GM23248 (cell line): ENCODE measurements at regions of chr14 and their contacts with region 1.

Region 1: GRCh38 chr14:59126710-59127432 is 61.6 kb upstream of the DAAM1 start:
- DNase-seq: peak; percentile 75
- H3K4me3 ChIP-seq: no peak overlapping the region
- H3K27ac ChIP-seq: no peak overlapping the region
- H3K4me1 ChIP-seq: peaks cover 10% of the 10 kb centered on the region; the same call in 1 of the 2 replicates
- H3K27me3 ChIP-seq: no peaks in the 10 kb centered on the region

Region 2: GRCh38 chr14:58501214-58501816 is 625.6 kb before region 1 on chr14:
- in situ Hi-C with region 1: loop called (anchors 10 kb)
- DNase-seq: peak; percentile 79
- H3K4me3 ChIP-seq: no peak overlapping the region
- H3K27ac ChIP-seq: no peak overlapping the region
- H3K4me1 ChIP-seq: no peaks in the 10 kb centered on the region
- H3K27me3 ChIP-seq: no peaks in the 10 kb centered on the region

Region 3: GRCh38 chr14:58637391-58638230 is 489.3 kb before region 1 on chr14 and contains the start of gene DACT1:
- in situ Hi-C with region 1: loop called (anchors 10 kb)
- DNase-seq: peak; percentile 86
- H3K4me3 ChIP-seq: peak within 1 kb of the TSS; percentile 93
- H3K27ac ChIP-seq: peak within 1 kb of the TSS; percentile 88
- H3K4me1 ChIP-seq: peaks cover 34% of the 10 kb centered on the region
- H3K27me3 ChIP-seq: no peaks in the 10 kb centered on the region
- total RNA-seq, gene DACT1: 21.2 and 26.9 TPM in 2 replicates

Region 4: GRCh38 chr14:59438195-59438647 is 311.4 kb after region 1 on chr14:
- in situ Hi-C with region 1: loop called (anchors 5 kb)
- DNase-seq: peak; percentile 75
- H3K4me3 ChIP-seq: peak overlapping the region; percentile 18; the same call in 1 of the 2 replicates
- H3K27ac ChIP-seq: peak overlapping the region; percentile 58
- H3K4me1 ChIP-seq: peaks cover 45% of the 10 kb centered on the region
- H3K27me3 ChIP-seq: no peaks in the 10 kb centered on the region